Activated naive CD4-positive, alpha-beta T cell treated with anti-CD3 and anti-CD28 coated beads for 36 hours (primary cell): ENCODE measurements at regions of chr10 and their contacts with region 1.

Region 1: GRCh38 chr10:29658984-29659965 is 24.5 kb upstream of the SVIL start:
- DNase-seq: peak; percentile 83
- H3K4me3 Mint-ChIP-seq: no peak overlapping the region
- H3K27ac Mint-ChIP-seq: peak overlapping the region; percentile 51
- H3K4me1 Mint-ChIP-seq: peaks cover 34% of the 10 kb centered on the region
- H3K27me3 Mint-ChIP-seq: no peaks in the 10 kb centered on the region

Region 2: DNA sequence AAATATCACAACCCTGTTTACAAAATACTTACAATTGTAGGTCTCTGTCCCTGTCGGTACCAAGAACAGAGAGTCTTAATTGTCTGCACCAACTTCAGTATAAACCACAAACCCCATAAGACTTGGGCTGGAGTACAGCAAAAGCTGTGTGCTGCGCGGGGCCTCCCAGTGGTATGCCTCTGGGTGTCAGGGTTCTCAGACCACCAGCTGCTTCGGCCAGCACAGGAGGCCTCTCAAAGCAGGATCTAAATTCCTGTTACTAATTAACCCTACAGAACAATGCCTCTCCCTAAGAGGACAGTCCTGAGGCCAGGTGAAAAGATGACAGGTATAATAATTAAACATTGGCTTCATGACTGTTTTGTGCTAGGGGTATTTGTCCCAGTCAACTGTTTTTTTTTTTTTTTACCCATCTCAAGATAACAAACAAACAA is 23.5 kb before region 1 on chr10:
- CTCF ChIA-PET with region 1: interaction called, 4 read pairs
- intact Hi-C with region 1: loop called (anchors 1 kb)
- DNase-seq: no peak
- H3K4me3 Mint-ChIP-seq: no peak overlapping the region
- H3K27ac Mint-ChIP-seq: no peak overlapping the region
- H3K4me1 Mint-ChIP-seq: peaks cover 42% of the 10 kb centered on the region
- H3K27me3 Mint-ChIP-seq: no peaks in the 10 kb centered on the region

Region 3: DNA sequence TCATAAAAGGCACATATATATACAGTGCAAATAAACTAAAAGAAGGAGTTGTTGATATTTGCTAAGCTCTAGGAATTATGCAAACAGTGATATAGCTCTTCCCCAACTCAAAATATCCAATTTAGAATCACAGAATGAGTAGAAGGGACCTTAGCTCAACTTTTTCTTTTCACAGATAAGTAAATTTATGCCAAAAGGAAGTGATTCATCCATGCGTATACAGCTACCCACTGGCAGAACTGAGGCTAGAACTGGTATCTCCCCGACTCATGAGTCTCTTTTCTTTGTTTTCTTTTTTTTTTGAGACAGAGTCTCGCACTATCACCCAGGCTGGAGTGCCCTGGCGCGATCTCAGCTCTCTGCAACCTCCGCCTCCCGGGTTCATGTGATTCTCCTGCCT is 29.7 kb after region 1 on chr10:
- CTCF ChIA-PET with region 1: interaction called, 3 read pairs
- intact Hi-C with region 1: loop called (anchors 1 kb)
- DNase-seq: peak; percentile 50
- H3K4me3 Mint-ChIP-seq: no peak overlapping the region
- H3K27ac Mint-ChIP-seq: peak overlapping the region; percentile 30
- H3K4me1 Mint-ChIP-seq: peaks cover 39% of the 10 kb centered on the region
- H3K27me3 Mint-ChIP-seq: no peaks in the 10 kb centered on the region

Region 4: GRCh38 chr10:29735596-29736318 is 76.5 kb after region 1 on chr10:
- CTCF ChIA-PET with region 1: no interaction called
- intact Hi-C with region 1: loop called (anchors 1 kb)
- DNase-seq: peak; percentile 86
- H3K4me3 Mint-ChIP-seq: peak overlapping the region; percentile 78
- H3K27ac Mint-ChIP-seq: peak overlapping the region; percentile 73
- H3K4me1 Mint-ChIP-seq: peaks cover 34% of the 10 kb centered on the region
- H3K27me3 Mint-ChIP-seq: peaks cover 8% of the 10 kb centered on the region

Region 5: GRCh38 chr10:30080161-30080560 is 420.9 kb after region 1 on chr10:
- CTCF ChIA-PET with region 1: no interaction called
- intact Hi-C with region 1: no loop called
- DNase-seq: no peak
- H3K4me3 Mint-ChIP-seq: no peak overlapping the region
- H3K27ac Mint-ChIP-seq: no peak overlapping the region
- H3K4me1 Mint-ChIP-seq: no peaks in the 10 kb centered on the region
- H3K27me3 Mint-ChIP-seq: peaks cover 27% of the 10 kb centered on the region

Region 6: GRCh38 chr10:30433730-30434272 is 774.5 kb after region 1 on chr10 and contains the start of gene MAP3K8:
- CTCF ChIA-PET with region 1: no interaction called
- intact Hi-C with region 1: loop called (anchors 10 kb)
- DNase-seq: peak; percentile 87
- H3K4me3 Mint-ChIP-seq: peak within 1 kb of the TSS; percentile 84
- H3K27ac Mint-ChIP-seq: peak within 1 kb of the TSS; percentile 67
- H3K4me1 Mint-ChIP-seq: peaks cover 41% of the 10 kb centered on the region
- H3K27me3 Mint-ChIP-seq: no peaks in the 10 kb centered on the region
- total RNA-seq, gene MAP3K8: 13.6 to 14.5 TPM